Activated CD4-positive, alpha-beta memory T cell treated with anti-CD3 and anti-CD28 coated beads, Interleukin-2, amount 10 ng/mL, durations not matched to agents 7 days and 5 days (primary cell): ENCODE measurements at regions of chr6 and their contacts with region 1.

Region 1: DNA sequence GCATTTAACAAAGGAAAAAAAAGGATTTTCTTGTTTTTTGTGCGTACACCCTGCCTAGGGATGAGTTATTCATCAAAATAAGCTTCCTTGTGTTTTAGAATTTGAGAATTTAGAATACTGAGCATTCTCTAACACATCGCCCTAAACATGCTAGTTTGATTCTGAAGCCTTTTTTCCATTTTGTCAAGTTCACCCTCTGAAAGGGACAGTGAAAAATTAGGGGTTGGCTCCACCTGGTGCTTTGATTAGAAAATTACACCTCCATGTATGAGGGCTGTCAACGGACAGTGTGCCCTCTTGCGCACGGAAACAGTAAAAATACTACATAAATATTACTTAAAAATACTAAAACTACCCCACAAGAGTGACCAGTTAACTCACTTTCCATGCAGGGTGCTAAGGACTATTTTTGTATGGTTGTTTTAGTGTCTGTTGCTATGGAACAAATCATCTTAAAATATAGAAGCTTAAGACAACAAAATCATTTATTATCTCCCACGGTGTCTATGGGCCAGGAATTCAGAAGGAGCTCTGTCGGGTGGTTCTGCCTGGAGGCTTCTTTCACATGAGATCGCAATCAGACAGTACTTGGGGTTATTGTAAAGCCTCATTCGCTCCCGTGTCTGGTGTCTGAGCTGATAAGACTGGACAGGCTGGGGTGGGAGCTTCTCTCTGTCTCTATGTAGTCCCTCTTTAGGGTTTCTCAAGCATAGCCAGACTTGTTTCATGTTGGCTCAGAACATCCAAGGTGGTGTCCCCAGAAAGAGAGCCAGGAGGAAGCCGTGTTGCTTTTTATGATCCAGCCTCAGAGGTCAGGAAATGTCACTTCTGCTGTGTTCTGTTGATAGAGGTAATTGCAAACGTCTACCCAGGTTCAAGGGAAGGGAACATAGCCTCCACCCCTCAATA is 41.1 kb upstream of the TMEM170B start:
- DNase-seq: peak; percentile 75
- H3K4me3 Mint-ChIP-seq: no peak overlapping the region
- H3K27ac Mint-ChIP-seq: no peak overlapping the region
- H3K4me1 Mint-ChIP-seq: peaks cover 12% of the 10 kb centered on the region
- H3K27me3 Mint-ChIP-seq: no peaks in the 10 kb centered on the region

Region 2: DNA sequence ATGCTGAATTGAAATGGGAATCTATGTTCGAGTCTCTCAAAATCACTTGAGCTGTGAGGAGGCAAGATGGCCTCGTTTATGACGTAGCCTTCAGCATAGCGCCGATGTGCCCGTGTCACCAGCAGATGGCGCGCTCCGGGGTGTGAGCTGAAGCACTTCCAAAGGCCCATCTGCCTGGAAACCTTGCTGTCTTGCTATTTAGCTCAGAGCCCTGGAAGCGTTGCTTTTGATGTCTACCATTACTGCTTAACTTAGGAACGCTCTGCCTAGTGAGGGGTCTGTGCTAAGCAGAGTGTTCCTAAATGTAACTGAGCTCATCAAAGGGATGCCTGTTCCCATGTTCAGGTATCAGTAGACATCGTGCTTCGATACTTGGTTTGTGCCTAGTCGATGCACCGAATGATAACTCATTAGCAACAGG is 541.8 kb before region 1 on chr6:
- CTCF ChIA-PET with region 1: interaction called, 17 read pairs
- POLR2A ChIA-PET with region 1: no interaction called
- DNase-seq: peak; percentile 76
- H3K4me3 Mint-ChIP-seq: no peak overlapping the region
- H3K27ac Mint-ChIP-seq: no peak overlapping the region
- H3K4me1 Mint-ChIP-seq: peaks cover 2% of the 10 kb centered on the region
- H3K27me3 Mint-ChIP-seq: peaks cover 26% of the 10 kb centered on the region

Region 3: DNA sequence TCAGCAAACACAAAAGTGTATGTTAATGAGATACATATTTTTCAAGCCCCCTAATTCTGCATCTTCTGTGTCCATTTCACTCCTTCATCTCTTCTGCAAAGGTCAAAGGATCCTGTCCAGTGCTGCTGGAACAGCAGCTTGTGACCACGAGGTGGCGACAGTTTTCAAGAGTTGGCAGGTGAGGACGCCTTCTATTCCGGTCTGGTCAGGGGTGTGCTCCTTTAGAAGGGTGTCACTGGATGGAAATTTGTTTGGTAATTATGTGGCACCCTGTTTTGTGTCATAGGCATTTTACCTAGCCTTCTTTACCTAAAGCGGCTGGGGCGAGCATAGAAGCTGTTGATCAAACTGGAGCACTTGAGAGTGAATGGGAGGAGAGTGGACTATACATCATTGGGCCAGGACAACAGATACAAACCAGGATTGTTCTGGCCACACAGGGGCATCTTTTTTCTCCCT is 352.0 kb before region 1 on chr6:
- CTCF ChIA-PET with region 1: interaction called, 85 read pairs
- POLR2A ChIA-PET with region 1: interaction called, 3 read pairs
- DNase-seq: peak; percentile 79
- H3K4me3 Mint-ChIP-seq: no peak overlapping the region
- H3K27ac Mint-ChIP-seq: no peak overlapping the region
- H3K4me1 Mint-ChIP-seq: peaks cover 4% of the 10 kb centered on the region
- H3K27me3 Mint-ChIP-seq: no peaks in the 10 kb centered on the region

Region 4: DNA sequence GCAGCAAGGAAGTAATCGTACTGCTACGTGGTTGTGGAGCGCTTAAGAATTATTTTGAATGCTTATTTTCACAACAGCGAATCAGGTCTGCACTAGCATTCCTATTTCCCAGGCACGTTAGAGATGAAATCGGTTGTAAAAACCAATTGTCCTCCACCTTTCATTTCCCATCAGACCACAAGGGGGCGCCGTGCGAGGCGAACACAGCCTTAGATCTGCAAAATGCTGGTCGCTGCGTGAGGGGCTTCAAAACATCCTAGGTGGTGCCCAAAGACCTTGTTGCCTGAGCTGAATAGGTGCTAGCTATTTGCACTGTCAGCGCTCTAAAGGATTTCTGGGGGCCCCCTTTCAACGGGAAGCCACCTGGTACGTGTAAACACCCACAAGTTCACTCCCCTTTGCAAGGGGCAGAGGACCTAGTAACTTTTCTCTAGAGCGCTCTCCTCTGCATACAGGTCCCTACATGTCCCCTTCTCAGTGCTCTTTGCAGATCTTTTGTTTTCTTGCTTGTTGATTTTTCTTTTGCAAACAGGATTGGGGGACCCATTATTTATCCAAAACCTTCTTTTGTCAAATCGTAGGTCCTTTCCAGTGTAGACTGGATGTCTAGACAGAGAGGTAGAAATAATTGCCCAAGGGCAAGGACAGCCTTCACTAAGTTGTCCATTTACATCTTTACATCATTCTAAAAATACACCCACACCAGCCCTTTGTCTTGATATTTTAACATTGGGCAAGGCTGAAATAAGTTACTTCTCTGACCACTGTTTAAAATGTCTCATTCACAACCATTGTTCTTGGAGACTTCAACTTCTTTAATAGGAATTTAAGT is 323.7 kb before region 1 on chr6:
- CTCF ChIA-PET with region 1: interaction called, 27 read pairs
- POLR2A ChIA-PET with region 1: no interaction called
- DNase-seq: peak; percentile 77
- H3K4me3 Mint-ChIP-seq: no peak overlapping the region
- H3K27ac Mint-ChIP-seq: no peak overlapping the region
- H3K4me1 Mint-ChIP-seq: peaks cover 10% of the 10 kb centered on the region
- H3K27me3 Mint-ChIP-seq: no peaks in the 10 kb centered on the region

Region 5: DNA sequence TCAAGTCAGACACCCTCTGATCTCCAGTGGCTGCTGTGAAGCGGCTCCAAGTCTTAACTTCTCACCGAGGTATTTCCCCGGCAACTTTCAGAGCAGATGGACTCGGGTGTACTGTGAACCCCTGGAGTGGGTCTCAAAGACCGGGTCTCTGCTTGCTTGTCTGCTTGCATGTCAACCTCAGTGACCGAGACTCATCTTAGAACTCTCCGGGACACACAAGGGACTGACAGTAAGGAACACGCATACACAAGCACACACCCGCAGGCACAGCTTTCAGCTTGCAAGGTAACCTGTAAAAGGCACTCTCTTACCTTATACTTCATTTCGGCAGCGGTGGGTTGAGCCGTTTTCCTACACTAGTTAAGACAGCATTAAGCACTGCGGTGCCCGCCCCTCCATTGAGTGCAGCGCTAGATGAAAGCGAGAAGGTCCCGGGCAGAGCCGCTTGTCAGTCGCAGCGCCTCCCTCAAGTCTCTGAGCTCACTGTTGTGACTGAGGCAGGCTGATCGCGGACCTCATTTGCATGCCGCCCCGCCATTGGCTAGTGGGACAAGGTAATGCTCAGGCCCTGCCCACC is 264.1 kb before region 1 on chr6 and contains the start of gene NEDD9:
- CTCF ChIA-PET with region 1: interaction called, 10 read pairs
- POLR2A ChIA-PET with region 1: interaction called, 11 read pairs
- DNase-seq: peak; percentile 97
- H3K4me3 Mint-ChIP-seq: peak within 1 kb of the TSS; percentile 86
- H3K27ac Mint-ChIP-seq: peak within 1 kb of the TSS; percentile 99
- H3K4me1 Mint-ChIP-seq: peaks cover 70% of the 10 kb centered on the region
- H3K27me3 Mint-ChIP-seq: no peaks in the 10 kb centered on the region
- total RNA-seq, gene NEDD9: 60.1 to 64.8 TPM

Region 6: DNA sequence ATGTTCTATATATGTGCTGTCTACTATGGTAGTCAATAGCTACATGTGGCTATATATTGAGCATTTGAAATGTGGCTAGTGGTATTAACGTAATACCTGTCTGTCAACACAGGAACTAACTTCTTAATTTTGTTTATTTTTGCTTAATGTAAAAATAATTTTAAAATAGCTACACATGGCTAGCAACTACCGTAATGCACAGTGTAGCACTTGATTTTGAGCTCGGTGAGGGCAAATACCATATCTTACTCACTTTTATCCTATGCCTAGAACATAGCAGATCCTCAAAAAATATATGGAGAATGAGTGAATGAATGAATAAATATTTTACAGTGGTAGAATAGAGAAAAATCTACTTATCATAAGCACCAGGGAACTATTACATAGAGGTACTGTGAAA is 13.1 kb after region 1 on chr6:
- CTCF ChIA-PET with region 1: interaction called, 21 read pairs
- POLR2A ChIA-PET with region 1: no interaction called
- DNase-seq: no peak
- H3K4me3 Mint-ChIP-seq: no peak overlapping the region
- H3K27ac Mint-ChIP-seq: no peak overlapping the region
- H3K4me1 Mint-ChIP-seq: no peaks in the 10 kb centered on the region
- H3K27me3 Mint-ChIP-seq: peaks cover 47% of the 10 kb centered on the region